Posterior vena cava (tissue), 2 donors: ENCODE measurements at regions of chr7 and their contacts with region 1.

Region 1: GRCh38 chr7:55983537-55983936 is 19.2 kb downstream of the NIPSNAP2 start:
- DNase-seq: no peak

Region 2: DNA sequence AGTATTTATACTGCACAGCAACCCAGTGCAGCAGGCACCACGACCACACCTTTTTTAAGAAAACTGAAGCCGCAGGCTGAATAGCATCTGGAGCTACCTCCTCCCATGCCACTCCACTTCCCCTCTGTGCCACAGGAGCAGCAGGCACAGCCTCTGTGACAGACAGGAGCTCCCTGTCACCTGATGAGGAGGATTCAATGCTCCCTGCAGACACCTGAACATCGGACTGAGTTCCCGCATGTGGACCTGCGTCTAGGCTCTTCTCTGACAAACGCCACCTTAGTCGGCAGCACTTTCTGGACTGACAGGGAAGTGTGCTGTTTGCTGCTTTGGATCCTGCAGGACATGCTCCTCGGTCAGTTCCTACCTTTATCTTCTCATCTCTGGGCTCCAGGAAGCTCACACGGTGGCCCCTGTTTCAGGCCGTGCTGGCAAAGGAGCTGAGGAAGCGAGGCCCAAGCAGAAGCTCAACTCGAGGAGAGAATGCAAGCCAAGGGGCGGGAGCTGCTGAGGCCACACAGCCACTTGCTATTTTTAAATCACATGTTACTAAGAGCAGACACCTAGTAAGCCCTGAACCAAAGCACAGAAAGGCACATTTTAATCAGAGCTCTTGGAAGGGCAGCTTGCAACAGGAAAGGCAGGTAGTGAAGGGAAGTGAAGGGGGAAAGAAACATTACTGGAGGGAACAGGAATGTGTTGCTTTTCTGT is 467.8 kb before region 1 on chr7:
- intact Hi-C with region 1: loop called in 1 of 2 experiments (anchors 5 kb)
- DNase-seq: no peak

Region 3: GRCh38 chr7:56074371-56074791 is 90.8 kb after region 1 on chr7:
- intact Hi-C with region 1: no loop called
- DNase-seq: peak; percentile 92